BJ (cell line): ENCODE measurements at regions of chr10 and their contacts with region 1.

Region 1: DNA sequence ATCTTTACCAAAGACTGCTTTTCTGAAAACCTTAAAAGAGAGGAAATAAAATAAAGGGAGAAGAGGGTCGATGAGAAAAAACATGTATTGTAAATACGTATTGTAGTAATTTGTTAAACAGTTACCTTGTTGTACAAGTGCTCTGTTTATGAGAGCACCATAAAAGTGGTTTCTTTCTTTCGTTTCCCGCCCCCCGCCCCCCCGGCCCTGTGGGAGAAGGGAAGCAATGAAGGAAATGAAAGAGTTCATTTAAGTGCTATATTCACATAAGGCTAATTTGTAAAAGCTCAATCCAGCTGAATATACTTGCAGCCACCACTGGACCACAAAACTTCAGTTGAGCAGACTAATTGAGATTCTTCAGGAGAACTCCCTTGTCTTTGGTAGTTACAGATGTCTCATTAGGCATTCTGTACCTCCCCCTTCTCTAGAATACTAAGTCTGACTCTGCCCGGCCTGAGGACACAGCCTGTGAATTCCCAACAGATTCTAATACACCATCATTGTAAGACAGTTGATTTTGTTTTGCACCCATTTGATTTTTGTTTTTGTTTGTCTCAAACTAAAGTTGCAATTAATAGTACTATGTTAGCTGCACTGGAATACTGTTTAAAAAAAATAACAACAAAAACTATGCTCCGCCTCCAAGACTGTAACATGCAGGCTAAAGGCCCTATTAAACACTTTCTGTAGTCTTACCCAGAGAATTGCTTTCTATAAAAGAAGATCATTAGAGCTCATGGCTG is 124.9 kb downstream of the ARHGAP12 start:
- DNase-seq: no peak
- H3K4me3 ChIP-seq: no peak overlapping the region
- H3K27me3 ChIP-seq: no peaks in the 10 kb centered on the region
- CTCF ChIP-seq: no peak

Region 2: DNA sequence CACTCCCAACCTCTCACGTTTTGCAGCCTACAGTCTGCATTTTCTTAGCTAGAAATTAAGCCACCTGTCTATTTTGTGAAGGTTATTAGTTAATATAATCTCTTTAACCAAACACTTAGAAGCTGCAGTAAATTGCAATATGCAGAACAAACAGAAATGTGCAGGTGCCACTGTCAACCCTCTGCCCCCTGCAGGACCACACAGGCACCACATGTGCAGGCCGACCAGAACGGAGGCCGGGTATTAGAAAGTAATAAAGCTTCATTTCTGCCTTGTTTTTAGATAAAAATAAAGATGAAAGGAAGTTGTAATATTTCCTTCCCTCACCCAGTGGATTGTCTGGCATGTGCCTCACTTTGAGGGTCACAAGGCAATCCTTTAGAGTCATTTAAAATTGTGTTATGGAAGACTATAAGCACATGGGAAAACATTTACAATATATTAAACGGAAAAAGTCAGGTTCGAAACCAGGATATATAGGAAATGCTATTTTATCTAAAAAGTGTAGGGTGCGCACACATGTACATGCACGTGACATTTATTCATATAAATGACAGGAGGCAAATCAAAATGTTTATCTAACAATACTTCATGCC is 33.4 kb before region 1 on chr10:
- CTCF ChIA-PET with region 1: interaction called, 4 read pairs
- POLR2A ChIA-PET with region 1: interaction called, 14 read pairs
- DNase-seq: no peak
- H3K4me3 ChIP-seq: no peak overlapping the region
- H3K27me3 ChIP-seq: no peaks in the 10 kb centered on the region
- CTCF ChIP-seq: peak; percentile 47; the same call in 1 of the 2 replicates